Activated T-helper 1 cell treated with anti-CD3 and anti-CD28 coated beads, Interleukin-12 subunit alpha, Interleukin-12 subunit beta, Interleukin-2, Interleukin-4 antibody, amounts not matched to agents 30 ng/mL and 10 ng/mL and 1 ng/mL, durations not matched to agents 14 hours and 24 hours and 36 hours (primary cell): ENCODE measurements at regions of chr2 and their contacts with region 1.

Region 1: GRCh38 chr2:8681786-8682692 is at the start of gene ID2:
- DNase-seq: peak; percentile 99
- H3K4me3 Mint-ChIP-seq: peak within 1 kb of the TSS; percentile 99
- H3K27ac Mint-ChIP-seq: peak within 1 kb of the TSS; percentile 97
- H3K4me1 Mint-ChIP-seq: peaks cover 41% of the 10 kb centered on the region
- H3K27me3 Mint-ChIP-seq: peaks cover 14% of the 10 kb centered on the region
- total RNA-seq, gene ID2: 301 and 306 TPM in 2 replicates

Region 2: GRCh38 chr2:7437716-7438632 is 1244.1 kb before region 1 on chr2:
- intact Hi-C with region 1: loop called (anchors 1 kb)
- DNase-seq: no peak
- H3K4me3 Mint-ChIP-seq: peak overlapping the region; percentile 54
- H3K27ac Mint-ChIP-seq: peak overlapping the region; percentile 88
- H3K4me1 Mint-ChIP-seq: peaks cover 86% of the 10 kb centered on the region
- H3K27me3 Mint-ChIP-seq: no peaks in the 10 kb centered on the region

Region 3: DNA sequence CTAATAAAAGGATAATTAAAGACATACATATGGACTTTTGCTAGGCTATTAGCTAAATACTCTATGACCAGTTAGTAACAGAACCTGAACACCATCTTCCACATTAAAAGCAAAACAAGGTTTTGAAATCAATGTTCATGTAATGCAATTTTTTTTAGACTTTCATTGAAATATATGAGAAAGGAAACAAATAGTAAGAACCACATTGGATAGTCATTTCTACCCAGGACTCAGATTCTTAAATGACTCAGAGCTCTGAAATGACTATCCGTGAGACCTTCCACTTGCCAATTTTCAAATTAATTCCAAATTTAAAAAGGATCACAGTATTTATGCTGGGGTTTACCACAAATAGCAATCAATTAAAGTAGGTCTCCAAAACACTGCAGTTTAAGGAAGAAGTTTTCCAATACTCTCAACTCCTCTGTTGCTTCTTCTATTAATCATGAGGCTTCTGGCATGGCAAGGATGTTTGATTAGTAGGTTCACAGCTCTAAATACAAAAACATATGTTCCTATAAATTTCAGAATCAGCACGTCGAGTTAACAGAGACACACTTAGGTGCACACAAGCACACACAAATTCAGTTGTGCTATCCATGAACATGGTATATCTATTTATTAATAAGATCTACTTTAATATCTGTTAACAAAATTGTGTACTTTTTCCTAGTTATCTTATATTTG is 923.8 kb before region 1 on chr2:
- intact Hi-C with region 1: loop called (anchors 5 kb)
- DNase-seq: no peak
- H3K4me3 Mint-ChIP-seq: no peak overlapping the region
- H3K27ac Mint-ChIP-seq: peak overlapping the region; percentile 76
- H3K4me1 Mint-ChIP-seq: peaks cover 22% of the 10 kb centered on the region
- H3K27me3 Mint-ChIP-seq: no peaks in the 10 kb centered on the region

Region 4: GRCh38 chr2:7984693-7985353 is 697.2 kb before region 1 on chr2:
- intact Hi-C with region 1: loop called (anchors 2 kb)
- DNase-seq: no peak
- H3K4me3 Mint-ChIP-seq: peak overlapping the region; percentile 12
- H3K27ac Mint-ChIP-seq: peak overlapping the region; percentile 82
- H3K4me1 Mint-ChIP-seq: peaks cover 28% of the 10 kb centered on the region
- H3K27me3 Mint-ChIP-seq: no peaks in the 10 kb centered on the region

Region 5: DNA sequence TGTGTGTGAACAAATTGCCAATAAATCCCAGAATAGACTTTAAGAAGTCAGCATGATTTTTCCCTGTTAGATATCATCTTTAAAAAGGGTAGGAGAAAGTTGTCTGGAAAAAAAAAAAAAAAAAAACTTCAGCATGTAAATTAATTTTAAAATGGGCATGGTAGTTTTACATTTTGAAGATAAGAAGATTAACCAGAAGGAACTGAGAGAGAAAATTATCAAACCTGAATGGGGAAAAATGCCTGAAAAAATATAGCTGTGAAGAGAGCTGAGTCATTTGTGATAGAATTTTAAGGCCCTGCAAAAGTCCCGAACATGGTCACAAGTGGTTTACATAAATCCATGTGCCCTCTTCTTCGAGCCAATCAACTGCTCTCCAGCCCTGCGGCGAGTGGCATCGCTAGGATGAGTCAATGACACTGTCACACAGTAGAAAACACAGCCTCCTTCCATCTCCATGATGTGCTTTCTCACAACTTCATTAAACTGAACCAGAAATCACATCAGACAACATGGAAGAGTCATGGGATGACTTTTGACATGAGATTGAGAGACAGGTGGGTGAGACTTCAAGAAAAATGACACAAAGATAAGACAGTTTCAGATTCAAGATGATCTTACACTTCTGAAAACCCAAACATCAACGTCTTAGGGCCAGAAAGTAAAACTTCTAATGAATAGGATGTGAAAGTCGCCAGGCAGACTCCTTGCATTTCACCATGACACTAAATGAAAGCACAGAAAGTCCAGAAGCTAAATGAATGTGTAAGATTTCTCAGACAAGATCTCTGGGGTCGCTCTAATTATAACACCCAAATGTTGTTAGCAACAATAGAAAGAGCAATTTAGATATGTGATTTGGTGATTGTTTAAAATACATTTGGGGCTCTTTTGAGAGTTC is 273.2 kb before region 1 on chr2:
- intact Hi-C with region 1: loop called (anchors 1 kb)
- DNase-seq: peak; percentile 49
- H3K4me3 Mint-ChIP-seq: peak overlapping the region; percentile 1
- H3K27ac Mint-ChIP-seq: peak overlapping the region; percentile 80
- H3K4me1 Mint-ChIP-seq: peaks cover 19% of the 10 kb centered on the region
- H3K27me3 Mint-ChIP-seq: peaks cover 15% of the 10 kb centered on the region

Region 6: GRCh38 chr2:8549273-8549922 is 132.6 kb before region 1 on chr2:
- intact Hi-C with region 1: no loop called
- DNase-seq: no peak
- H3K4me3 Mint-ChIP-seq: no peak overlapping the region
- H3K27ac Mint-ChIP-seq: no peak overlapping the region
- H3K4me1 Mint-ChIP-seq: peaks cover 45% of the 10 kb centered on the region
- H3K27me3 Mint-ChIP-seq: no peaks in the 10 kb centered on the region

Region 7: GRCh38 chr2:8606226-8606625 is 75.8 kb before region 1 on chr2:
- intact Hi-C with region 1: loop called (anchors 1 kb)
- DNase-seq: no peak
- H3K4me3 Mint-ChIP-seq: no peak overlapping the region
- H3K27ac Mint-ChIP-seq: no peak overlapping the region
- H3K4me1 Mint-ChIP-seq: peaks cover 44% of the 10 kb centered on the region
- H3K27me3 Mint-ChIP-seq: peaks cover 1% of the 10 kb centered on the region

Region 8: GRCh38 chr2:9373077-9373875 is 691.2 kb after region 1 on chr2:
- intact Hi-C with region 1: no loop called
- DNase-seq: no peak
- H3K4me3 Mint-ChIP-seq: no peak overlapping the region
- H3K27ac Mint-ChIP-seq: no peak overlapping the region
- H3K4me1 Mint-ChIP-seq: no peaks in the 10 kb centered on the region
- H3K27me3 Mint-ChIP-seq: peaks cover 1% of the 10 kb centered on the region